Left lung (tissue), 14 donors: ENCODE measurements at regions of chr1 and their contacts with region 1.

Region 1: DNA sequence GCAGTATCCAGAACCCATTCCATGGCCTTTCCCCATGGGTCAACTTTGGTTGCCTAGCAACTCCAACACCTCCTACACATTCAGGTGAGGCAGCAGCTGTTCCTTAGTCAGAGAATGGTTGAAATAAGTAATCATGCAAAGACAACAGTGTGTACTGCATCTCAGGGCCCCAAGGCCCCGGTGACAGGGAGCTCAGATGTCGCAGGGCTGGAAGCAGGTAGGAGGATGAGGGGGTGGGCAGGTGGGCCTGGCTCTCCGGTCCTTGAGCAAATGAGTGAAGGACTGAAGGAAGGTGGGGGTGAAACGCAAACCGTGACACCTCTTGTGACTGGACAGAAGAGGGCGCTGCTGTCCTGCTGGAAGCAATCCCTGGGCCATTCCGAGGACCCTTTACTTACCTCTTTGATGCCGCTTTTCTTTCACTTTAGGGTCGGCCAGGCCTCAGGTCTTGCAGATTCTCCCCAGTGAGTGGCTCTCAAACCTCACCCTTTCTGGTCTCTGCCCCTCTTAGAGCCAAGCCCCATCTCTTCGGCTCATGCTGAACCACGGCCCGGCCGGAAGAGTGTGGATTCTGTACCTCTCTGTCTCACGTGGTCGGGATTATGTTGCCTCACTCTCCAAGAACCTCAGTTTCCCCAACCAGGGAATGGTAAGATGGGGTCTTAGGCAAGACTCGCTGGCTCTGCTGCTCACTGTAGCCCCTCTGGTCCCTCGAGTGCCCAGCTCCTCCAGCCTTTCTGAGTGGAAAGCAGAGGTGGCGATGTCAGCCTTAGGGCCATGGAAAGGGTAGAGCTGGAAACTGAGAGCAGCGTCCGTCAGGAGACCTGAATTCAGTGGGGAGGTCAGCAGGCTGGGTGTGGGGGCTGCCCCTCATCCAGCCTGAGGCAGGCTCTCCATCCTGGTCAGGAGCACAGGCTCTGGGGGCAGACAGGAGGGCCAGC is 5.6 kb upstream of the KCNA10 start:
- DNase-seq: peak in 3 of 4 donors; percentile 22 to 50 (median 46)
- ATAC-seq: peak; percentile 83
- H3K4me3 ChIP-seq: no peak overlapping the region
- H3K27ac ChIP-seq: no peak overlapping the region
- H3K4me1 ChIP-seq: no peaks in the 10 kb centered on the region
- H3K27me3 ChIP-seq: peaks cover 0 to 67% of the 10 kb centered on the region in 2 donors
- CTCF ChIP-seq: peak; percentile 47 to 49

Region 2: DNA sequence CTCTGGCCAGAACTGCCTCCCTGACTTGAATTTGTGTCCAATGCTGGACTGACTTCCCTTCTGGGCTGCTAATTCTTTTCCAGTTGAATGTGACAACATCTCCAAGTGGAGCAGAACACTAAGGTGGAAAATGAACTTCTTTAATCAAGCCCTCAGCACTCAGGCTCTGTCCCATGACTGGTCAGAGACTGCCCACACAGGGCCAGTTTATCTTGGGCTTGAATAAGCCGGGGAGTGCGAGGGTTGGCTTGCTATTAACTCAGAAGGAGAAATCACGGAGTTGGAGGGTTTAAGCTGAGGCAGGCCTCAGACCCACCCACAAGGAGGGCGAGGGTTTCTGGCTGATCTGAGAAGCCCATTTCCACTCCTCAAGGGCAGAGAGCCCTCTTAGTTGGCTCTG is 18.0 kb before region 1 on chr1:
- intact Hi-C with region 1: loop called in 1 of 2 experiments (anchors 2 kb)
- DNase-seq: no peak
- ATAC-seq: no peak
- H3K4me3 ChIP-seq: no peak overlapping the region
- H3K27ac ChIP-seq: no peak overlapping the region
- H3K4me1 ChIP-seq: no peaks in the 10 kb centered on the region
- H3K27me3 ChIP-seq: no peaks in the 10 kb centered on the region
- CTCF ChIP-seq: no peak

Region 3: DNA sequence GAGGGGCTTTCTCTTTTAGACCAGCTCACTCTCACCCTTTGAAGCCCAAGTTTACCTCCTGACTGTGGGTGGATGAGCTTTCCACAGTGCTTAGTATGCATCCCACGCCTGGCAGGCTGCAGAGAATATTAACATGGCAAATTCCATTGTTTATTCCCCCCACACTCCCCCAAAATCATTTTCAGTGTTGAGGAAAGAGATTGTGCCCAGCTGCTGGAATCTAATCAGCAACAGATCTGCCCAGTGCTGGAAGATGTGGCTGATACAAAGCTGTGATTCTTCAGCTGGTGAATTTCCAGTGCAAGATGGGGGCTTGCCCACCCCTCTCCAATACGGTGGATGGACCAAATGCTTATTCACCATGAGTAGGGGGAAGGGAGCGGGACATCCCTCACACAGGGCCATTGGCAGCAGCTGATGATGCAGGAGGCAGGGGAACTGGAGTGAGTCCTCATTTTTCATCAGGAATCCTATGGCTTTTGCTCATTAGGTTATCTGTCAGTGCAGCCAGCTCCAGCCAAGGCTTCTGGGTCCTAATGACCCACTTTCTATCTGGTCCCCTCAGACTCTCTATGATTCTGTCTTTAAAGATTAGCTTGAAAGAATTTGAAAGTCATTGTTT is 189.9 kb after region 1 on chr1:
- intact Hi-C with region 1: no loop called
- DNase-seq: no peak
- ATAC-seq: no peak
- H3K4me3 ChIP-seq: no peak overlapping the region
- H3K27ac ChIP-seq: no peak overlapping the region
- H3K4me1 ChIP-seq: no peaks in the 10 kb centered on the region
- H3K27me3 ChIP-seq: peaks cover 0 to 12% of the 10 kb centered on the region in 2 donors
- CTCF ChIP-seq: no peak